Adrenal gland (tissue), 19 donors: ENCODE measurements at regions of chr1 and their contacts with region 1.

Region 1: GRCh38 chr1:23528250-23528978 is 2.6 kb downstream of the E2F2 start:
- DNase-seq: peak; percentile 91 to 96 (median 95)
- H3K4me3 ChIP-seq: no peak overlapping the region
- H3K27ac ChIP-seq: peak overlapping the region in 4 of 5 donors; percentile 3 to 63 (median 41)
- H3K4me1 ChIP-seq: peaks cover 23 to 45% of the 10 kb centered on the region in 2 donors
- H3K27me3 ChIP-seq: no peaks in the 10 kb centered on the region
- CTCF ChIP-seq: peak in 1 of 6 experiments; percentile 22
- POLR2A ChIP-seq: peak in 1 of 2 donors; percentile 11

Region 2: DNA sequence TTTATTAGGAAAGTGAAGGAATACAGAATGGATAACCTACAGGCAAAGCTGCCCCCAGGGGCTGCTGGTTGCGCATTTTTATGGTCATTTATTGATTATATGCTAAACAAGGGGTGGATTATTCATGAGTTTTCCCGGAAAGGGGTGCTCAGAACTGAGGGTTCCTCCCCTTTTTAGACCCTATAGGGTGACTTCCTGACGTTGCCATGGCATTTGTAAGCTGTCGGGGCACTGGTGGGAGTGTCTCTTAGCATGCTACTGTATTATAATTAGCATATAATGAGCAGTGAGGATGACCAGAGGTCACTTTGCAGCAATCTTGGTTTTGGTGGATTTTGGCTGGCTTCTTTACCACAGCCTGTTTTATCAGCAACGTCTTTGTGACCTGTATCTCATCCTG is 38.6 kb before region 1 on chr1:
- intact Hi-C with region 1: loop called in 1 of 2 experiments (anchors 5 kb)
- DNase-seq: no peak
- H3K4me3 ChIP-seq: no peak overlapping the region
- H3K27ac ChIP-seq: no peak overlapping the region
- H3K4me1 ChIP-seq: peaks cover 4 to 14% of the 10 kb centered on the region in 2 donors
- H3K27me3 ChIP-seq: no peaks in the 10 kb centered on the region
- CTCF ChIP-seq: no peak
- POLR2A ChIP-seq: no peak